GM12878 (cell line): ENCODE measurements at regions of chr1 and their contacts with region 1.

Region 1: DNA sequence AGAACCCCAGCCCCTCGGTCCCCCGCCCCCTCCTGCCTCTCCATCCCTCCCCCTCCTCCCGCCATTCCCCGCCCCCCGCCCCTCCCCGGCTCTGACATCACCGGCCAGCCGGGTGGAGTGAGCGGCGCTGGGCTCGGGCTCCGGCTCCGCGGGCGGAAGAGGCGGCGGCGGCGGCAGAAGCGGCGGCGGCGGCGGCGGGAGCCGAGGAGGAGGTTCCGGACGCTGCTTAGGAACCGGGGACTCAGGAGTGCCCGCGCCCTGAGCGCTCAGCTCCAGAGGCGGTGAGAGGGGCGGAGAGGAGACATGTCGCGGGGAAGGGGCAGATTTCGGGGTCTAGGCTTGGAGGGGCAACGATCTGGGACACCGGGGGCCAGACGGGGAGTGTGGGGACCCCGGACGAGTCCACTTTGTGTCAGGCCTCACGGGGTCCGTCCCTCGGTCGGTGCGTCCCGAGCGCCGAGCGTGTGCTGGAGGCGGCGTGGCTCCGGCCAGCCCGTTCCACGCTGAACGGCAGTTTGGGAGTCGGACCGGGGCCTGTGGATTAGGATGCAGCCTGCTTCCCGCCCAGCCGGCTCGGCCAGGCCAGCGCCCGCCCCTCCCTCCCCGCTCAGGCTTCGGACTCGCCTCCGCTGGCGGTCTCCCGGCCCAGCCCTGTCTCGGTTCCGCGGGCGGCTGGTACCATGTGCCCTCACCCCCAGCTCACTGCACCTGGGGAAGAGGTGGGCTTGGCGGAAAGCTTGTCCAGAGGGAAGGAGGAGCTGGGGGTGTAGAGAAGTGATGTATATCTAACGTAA is at the start of gene PEA15:
- DNase-seq: no peak
- ATAC-seq: peak; percentile 76
- H3K4me3 ChIP-seq: peak within 1 kb of the TSS; percentile 99
- H3K27ac ChIP-seq: peak within 1 kb of the TSS; percentile 96
- H3K4me1 ChIP-seq: peaks cover 26% of the 10 kb centered on the region
- H3K27me3 ChIP-seq: no peaks in the 10 kb centered on the region
- CTCF ChIP-seq: no peak
- EP300 ChIP-seq: no peak
- POLR2A ChIP-seq: peak; percentile 66; the same call in 1 of the 2 replicates
- RAD21 ChIP-seq: no peak
- polyA plus RNA-seq, gene PEA15: 15.1 to 28.2 TPM

Region 2: GRCh38 chr1:159421821-159422220 is 783.6 kb before region 1 on chr1:
- CTCF ChIA-PET with region 1: no interaction called
- POLR2A ChIA-PET with region 1: no interaction called
- RAD21 ChIA-PET with region 1: no interaction called
- SMC1A ChIA-PET with region 1: no interaction called
- in situ Hi-C with region 1: no loop called
- intact Hi-C with region 1: no loop called
- DNase-seq: no peak
- ATAC-seq: peak; percentile 38; the same call in 1 of the 3 replicates
- H3K4me3 ChIP-seq: no peak overlapping the region
- H3K27ac ChIP-seq: no peak overlapping the region
- H3K4me1 ChIP-seq: no peaks in the 10 kb centered on the region
- H3K27me3 ChIP-seq: no peaks in the 10 kb centered on the region
- CTCF ChIP-seq: peak in 2 of 3 experiments; percentile 21 to 29; a peak in 3 of 6 replicates
- EP300 ChIP-seq: no peak
- POLR2A ChIP-seq: no peak
- RAD21 ChIP-seq: no peak

Region 3: DNA sequence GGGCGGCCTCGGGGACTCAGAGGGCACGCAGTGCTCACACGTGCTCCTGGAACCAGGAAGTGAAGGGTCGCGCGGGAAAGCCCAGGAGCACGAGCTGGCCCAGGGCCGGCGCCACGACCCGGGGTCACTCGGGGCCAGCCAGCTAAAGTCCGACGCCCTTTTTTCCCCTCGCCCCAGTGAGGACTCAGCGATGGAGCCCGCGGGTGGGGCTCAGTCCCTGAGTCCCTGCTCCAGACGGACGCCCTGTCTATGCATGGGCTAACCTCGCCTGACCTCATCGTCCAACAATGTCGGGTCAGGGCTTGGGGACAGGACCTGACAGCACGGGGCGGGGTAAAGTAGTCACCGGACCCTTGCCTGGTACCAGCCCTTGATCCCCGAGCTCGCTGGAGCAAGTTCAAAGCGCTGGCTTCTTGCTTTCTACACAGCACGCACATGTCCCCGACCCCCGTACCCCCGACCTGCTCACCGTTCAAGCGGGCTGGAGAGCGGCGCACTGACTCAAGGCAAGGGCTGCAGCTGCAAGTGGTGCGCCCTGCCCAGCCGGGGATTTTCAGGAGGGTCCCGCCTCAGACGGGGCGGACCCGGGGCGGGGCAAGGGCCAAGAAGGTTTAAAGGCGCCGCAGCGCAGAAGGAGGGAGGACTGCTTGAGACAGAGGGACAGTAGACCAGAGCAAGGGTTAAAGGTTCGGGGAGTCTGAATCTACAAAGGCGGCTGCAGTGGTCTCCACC is 280.3 kb before region 1 on chr1 and contains the start of gene TAGLN2:
- CTCF ChIA-PET with region 1: no interaction called
- POLR2A ChIA-PET with region 1: interaction called, 10 read pairs
- RAD21 ChIA-PET with region 1: no interaction called
- SMC1A ChIA-PET with region 1: no interaction called
- in situ Hi-C with region 1: no loop called
- intact Hi-C with region 1: no loop called
- DNase-seq: peak; percentile 60
- ATAC-seq: peak; percentile 73
- H3K4me3 ChIP-seq: peak within 1 kb of the TSS; percentile 82
- H3K27ac ChIP-seq: peak within 1 kb of the TSS; percentile 82
- H3K4me1 ChIP-seq: peaks cover 32% of the 10 kb centered on the region
- H3K27me3 ChIP-seq: no peaks in the 10 kb centered on the region
- CTCF ChIP-seq: no peak
- EP300 ChIP-seq: no peak
- POLR2A ChIP-seq: peak; percentile 99
- RAD21 ChIP-seq: no peak
- polyA plus RNA-seq, gene TAGLN2: 216 to 262 TPM

Region 4: GRCh38 chr1:160124705-160125478 is 80.5 kb before region 1 on chr1:
- CTCF ChIA-PET with region 1: no interaction called
- POLR2A ChIA-PET with region 1: no interaction called
- RAD21 ChIA-PET with region 1: no interaction called
- SMC1A ChIA-PET with region 1: no interaction called
- in situ Hi-C with region 1: no loop called
- intact Hi-C with region 1: no loop called
- DNase-seq: no peak
- ATAC-seq: no peak
- H3K4me3 ChIP-seq: no peak overlapping the region
- H3K27ac ChIP-seq: no peak overlapping the region
- H3K4me1 ChIP-seq: no peaks in the 10 kb centered on the region
- H3K27me3 ChIP-seq: no peaks in the 10 kb centered on the region; a peak in 1 of 4 replicates
- CTCF ChIP-seq: no peak
- EP300 ChIP-seq: no peak
- POLR2A ChIP-seq: no peak
- RAD21 ChIP-seq: no peak

Region 5: DNA sequence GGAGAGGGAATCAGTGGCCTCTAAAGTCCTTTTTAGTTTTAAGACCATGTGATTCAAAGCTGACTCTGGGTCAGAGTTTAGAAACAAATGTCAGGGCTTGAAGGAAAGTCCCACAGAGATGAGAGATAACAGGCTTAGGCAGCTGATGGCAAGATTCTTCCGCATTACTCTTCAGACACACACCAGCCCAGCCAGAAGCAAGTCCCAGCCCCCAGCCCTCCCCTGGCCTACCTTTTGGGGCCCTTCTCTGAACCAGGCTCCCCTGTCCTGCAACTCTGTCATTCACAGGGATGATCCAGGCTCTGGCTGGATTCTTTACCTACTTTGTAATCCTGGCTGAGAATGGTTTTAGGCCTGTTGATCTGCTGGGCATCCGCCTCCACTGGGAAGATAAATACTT is 28.2 kb before region 1 on chr1:
- CTCF ChIA-PET with region 1: no interaction called
- POLR2A ChIA-PET with region 1: no interaction called
- RAD21 ChIA-PET with region 1: no interaction called
- SMC1A ChIA-PET with region 1: no interaction called
- in situ Hi-C with region 1: no loop called
- intact Hi-C with region 1: no loop called
- DNase-seq: no peak
- ATAC-seq: peak; percentile 68
- H3K4me3 ChIP-seq: no peak overlapping the region
- H3K27ac ChIP-seq: no peak overlapping the region
- H3K4me1 ChIP-seq: no peaks in the 10 kb centered on the region; the same call in 1 of the 2 replicates
- H3K27me3 ChIP-seq: no peaks in the 10 kb centered on the region; a peak in 2 of 4 replicates
- CTCF ChIP-seq: no peak
- EP300 ChIP-seq: no peak
- POLR2A ChIP-seq: 0 out of 2 replicates have a peak, but pooled peaks have one; percentile 25
- RAD21 ChIP-seq: no peak

Region 6: GRCh38 chr1:160219062-160219929 is 13.9 kb after region 1 on chr1:
- CTCF ChIA-PET with region 1: interaction called, 16 read pairs
- POLR2A ChIA-PET with region 1: interaction called, 3 read pairs
- RAD21 ChIA-PET with region 1: interaction called, 3 read pairs
- SMC1A ChIA-PET with region 1: interaction called, 32 read pairs
- in situ Hi-C with region 1: no loop called
- intact Hi-C with region 1: no loop called
- DNase-seq: no peak
- ATAC-seq: peak; percentile 44
- H3K4me3 ChIP-seq: no peak overlapping the region
- H3K27ac ChIP-seq: no peak overlapping the region
- H3K4me1 ChIP-seq: no peaks in the 10 kb centered on the region
- H3K27me3 ChIP-seq: no peaks in the 10 kb centered on the region
- CTCF ChIP-seq: peak; percentile 21 to 34 (median 34); a peak in 3 of 6 replicates
- EP300 ChIP-seq: no peak
- POLR2A ChIP-seq: no peak
- RAD21 ChIP-seq: peak; percentile 43

Region 7: DNA sequence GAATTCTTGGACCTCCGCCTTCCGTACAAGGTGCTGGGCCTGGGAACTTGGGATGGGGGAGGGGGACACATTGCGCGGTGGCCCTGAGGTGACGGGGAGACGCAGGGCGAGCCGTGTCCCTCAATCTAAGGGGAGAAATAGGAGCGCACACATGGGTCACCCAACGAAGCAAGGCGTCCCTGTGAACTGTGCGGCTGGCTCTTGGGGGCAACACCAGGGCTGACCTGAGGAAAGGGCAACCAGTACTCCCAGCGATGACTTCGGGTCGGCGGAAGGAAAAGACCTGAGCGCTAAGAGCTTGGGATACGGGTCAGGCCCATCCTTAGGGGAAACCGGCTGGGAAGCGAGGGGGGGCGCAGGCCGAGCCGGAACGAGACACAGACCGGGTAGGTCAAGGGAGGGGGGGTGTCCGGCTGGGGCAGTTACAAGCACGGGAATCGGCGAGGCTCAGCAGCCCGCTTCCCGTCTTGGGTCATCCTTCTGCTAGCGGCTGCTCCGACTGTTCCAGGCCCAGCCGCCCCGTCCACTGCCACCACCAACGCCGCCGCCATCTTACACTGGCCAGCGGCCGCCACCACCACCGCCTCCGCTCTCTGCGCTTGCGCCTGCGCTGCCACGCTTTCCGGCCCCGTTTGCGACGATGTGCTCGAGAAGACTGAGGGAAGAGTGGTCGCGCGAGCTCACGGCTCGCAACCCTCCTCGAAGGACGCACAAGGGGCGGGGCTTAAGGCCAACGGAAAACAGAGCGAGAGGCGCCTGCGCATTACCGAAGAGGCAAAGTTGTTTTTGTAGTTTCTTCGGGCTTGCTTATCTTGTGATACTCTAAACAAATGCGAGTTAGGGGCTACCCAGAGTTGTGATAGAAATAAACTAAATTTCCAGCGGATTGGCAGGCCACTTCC is 56.7 kb after region 1 on chr1 and contains the start of gene DCAF8:
- CTCF ChIA-PET with region 1: interaction called, 46 read pairs
- POLR2A ChIA-PET with region 1: interaction called, 13 read pairs
- RAD21 ChIA-PET with region 1: interaction called, 28 read pairs
- SMC1A ChIA-PET with region 1: interaction called, 32 read pairs
- in situ Hi-C with region 1: no loop called
- intact Hi-C with region 1: no loop called
- DNase-seq: peak; percentile 94
- ATAC-seq: peak; percentile 89
- H3K4me3 ChIP-seq: peak within 1 kb of the TSS; percentile 82
- H3K27ac ChIP-seq: peak within 1 kb of the TSS; percentile 90
- H3K4me1 ChIP-seq: peaks cover 3% of the 10 kb centered on the region
- H3K27me3 ChIP-seq: no peaks in the 10 kb centered on the region
- CTCF ChIP-seq: no peak
- EP300 ChIP-seq: no peak
- POLR2A ChIP-seq: peak; percentile 98
- RAD21 ChIP-seq: no peak
- polyA plus RNA-seq, gene DCAF8: 10.4 to 18.7 TPM